ENCODE measurements at regions of chrX and their contacts with region 1.

Region 1: DNA sequence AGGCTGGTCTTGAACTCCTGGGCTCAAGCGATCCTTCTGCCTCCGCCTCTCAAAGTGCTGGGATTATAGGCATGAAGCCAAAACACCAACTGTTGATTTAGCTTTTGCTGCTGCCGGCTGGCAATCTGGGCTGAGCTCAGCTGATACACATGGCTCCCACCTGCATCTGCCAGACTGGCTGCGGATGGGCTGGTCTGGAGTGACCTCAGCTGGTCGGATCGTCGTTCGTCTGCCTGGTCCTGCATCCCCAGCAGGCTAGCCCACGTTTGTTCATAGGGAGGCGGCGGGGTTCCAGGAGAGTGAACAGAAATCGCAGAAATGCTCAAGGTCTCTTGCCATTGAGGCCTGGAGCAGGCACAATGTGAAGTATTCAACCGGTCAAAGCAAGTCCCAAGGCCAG is 74.4 kb upstream of the DDX3X start:
- DNase-seq: no peak
- H3K4me3 ChIP-seq: no peak overlapping the region
- H3K27ac ChIP-seq: no peak overlapping the region
- H3K4me1 ChIP-seq: peaks cover 0 to 8% (median 0%) of the 10 kb centered on the region in 6 donors
- H3K27me3 ChIP-seq: peaks cover 0 to 17% (median 0%) of the 10 kb centered on the region in 7 donors
- CTCF ChIP-seq: no peak
- POLR2A ChIP-seq: no peak

Region 2: DNA sequence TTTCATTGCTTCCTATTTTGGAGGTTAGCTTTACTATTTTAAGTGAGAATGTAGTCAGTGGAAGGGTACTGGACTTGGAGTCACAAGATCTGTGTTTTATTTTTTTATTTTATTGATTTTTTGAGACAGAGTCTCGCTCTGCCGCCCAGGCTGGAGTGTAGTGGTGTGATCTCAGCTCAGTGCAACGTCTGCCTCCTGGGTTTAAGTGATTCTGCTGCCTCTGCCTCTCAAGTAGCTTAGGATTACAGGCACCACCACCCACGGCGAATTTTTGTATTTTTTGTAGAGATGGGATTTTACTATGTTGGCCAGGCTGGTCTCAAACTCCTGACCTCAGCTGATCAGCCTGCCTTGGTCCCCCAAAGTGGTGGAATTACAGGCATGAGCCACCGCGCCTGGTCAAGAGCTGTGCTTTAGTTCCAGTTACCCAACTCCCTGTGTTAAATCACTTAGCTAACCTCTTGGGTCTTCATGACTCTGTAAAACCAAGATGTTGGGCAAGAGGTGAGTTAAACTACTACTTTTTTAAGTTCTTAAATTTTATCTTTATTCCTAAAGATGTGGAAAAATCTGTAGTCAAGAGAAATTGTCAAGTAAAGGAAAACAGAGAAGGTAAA is 163.1 kb before region 1 on chrX:
- intact Hi-C with region 1: no loop called
- DNase-seq: no peak
- H3K4me3 ChIP-seq: no peak overlapping the region
- H3K27ac ChIP-seq: no peak overlapping the region
- H3K4me1 ChIP-seq: peaks cover 4 to 85% (median 57%) of the 10 kb centered on the region in 6 donors
- H3K27me3 ChIP-seq: no peaks in the 10 kb centered on the region
- CTCF ChIP-seq: no peak
- POLR2A ChIP-seq: no peak

Region 3: DNA sequence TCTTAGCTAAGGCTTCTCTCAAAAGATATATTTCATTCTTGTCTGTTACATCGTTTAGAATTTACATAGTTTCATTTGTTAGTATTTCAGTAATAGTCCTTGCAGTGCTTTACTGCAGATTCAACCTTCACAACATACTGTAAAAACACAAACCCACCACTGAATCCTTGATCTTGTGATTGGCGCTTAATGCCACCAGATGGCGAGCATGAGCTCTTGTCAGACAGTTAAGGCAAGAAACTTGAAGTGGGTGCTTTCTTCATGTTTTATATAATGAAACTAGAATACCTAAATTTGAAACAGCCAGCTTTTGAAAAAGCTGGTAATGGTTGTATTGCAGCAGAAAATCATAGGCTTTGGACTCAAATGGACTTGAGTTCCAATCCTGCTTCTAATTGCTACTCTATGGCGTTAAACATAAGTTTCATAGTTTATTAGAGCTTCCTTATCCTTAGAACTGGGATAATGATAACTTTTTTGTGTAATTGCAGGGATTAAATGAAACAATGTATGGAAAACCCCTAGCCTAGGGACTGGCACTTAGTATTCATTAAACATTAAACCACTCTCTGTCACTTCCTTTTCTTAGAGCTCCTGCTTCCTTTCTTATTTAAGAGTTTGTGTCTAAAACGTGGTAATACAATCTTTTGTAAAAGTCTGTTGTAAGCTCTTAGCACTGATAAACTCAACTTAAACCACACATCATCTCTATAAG is 79.2 kb before region 1 on chrX:
- intact Hi-C with region 1: loop called (anchors 10 kb)
- DNase-seq: no peak
- H3K4me3 ChIP-seq: no peak overlapping the region
- H3K27ac ChIP-seq: peak overlapping the region in 5 of 8 donors; percentile 16 to 58 (median 48)
- H3K4me1 ChIP-seq: peaks cover 0 to 35% (median 12%) of the 10 kb centered on the region in 6 donors
- H3K27me3 ChIP-seq: no peaks in the 10 kb centered on the region
- CTCF ChIP-seq: peak; percentile 24 to 75 (median 60)
- POLR2A ChIP-seq: no peak

Measured in spleen (tissue), 13 donors.